ENCODE measurements at regions of chrX and their contacts with region 1.

Region 1: GRCh38 chrX:134484039-134484438 is 24.1 kb downstream of the HPRT1 start:
- DNase-seq: peak in 1 of 35 experiments; percentile 57
- ATAC-seq: no peak
- H3K4me3 ChIP-seq: no peak overlapping the region
- H3K4me3 Mint-ChIP-seq: no peak overlapping the region
- H3K27ac ChIP-seq: no peak overlapping the region
- H3K27ac Mint-ChIP-seq: no peak overlapping the region
- H3K4me1 ChIP-seq: no peaks in the 10 kb centered on the region
- H3K4me1 Mint-ChIP-seq: no peaks in the 10 kb centered on the region
- H3K27me3 ChIP-seq: no peaks in the 10 kb centered on the region
- H3K27me3 Mint-ChIP-seq: peaks cover 0 to 4% of the 10 kb centered on the region in 2 donors

Region 2: GRCh38 chrX:134528960-134529359 is 44.9 kb after region 1 on chrX:
- CTCF ChIA-PET with region 1: no interaction called
- POLR2A ChIA-PET with region 1: no interaction called
- DNase-seq: no peak
- ATAC-seq: no peak
- H3K4me3 ChIP-seq: no peak overlapping the region
- H3K4me3 Mint-ChIP-seq: no peak overlapping the region
- H3K27ac ChIP-seq: no peak overlapping the region
- H3K27ac Mint-ChIP-seq: no peak overlapping the region
- H3K4me1 ChIP-seq: no peaks in the 10 kb centered on the region
- H3K4me1 Mint-ChIP-seq: no peaks in the 10 kb centered on the region
- H3K27me3 ChIP-seq: no peaks in the 10 kb centered on the region
- H3K27me3 Mint-ChIP-seq: peaks cover 0 to 11% of the 10 kb centered on the region in 2 donors

Region 3: GRCh38 chrX:134807039-134807731 is 323.1 kb after region 1 on chrX:
- CTCF ChIA-PET with region 1: no interaction called
- POLR2A ChIA-PET with region 1: interaction called in 1 of 2 experiments, 10 read pairs
- DNase-seq: peak; percentile 55 to 95 (median 86)
- ATAC-seq: peak; percentile 90 to 94 (median 92)
- H3K4me3 ChIP-seq: peak overlapping the region; percentile 79 to 94
- H3K4me3 Mint-ChIP-seq: peak overlapping the region; percentile 82 to 92 (median 86)
- H3K27ac ChIP-seq: peak overlapping the region; percentile 94
- H3K27ac Mint-ChIP-seq: peak overlapping the region; percentile 86 to 97
- H3K4me1 ChIP-seq: peaks cover 15 to 21% of the 10 kb centered on the region in 2 experiments
- H3K4me1 Mint-ChIP-seq: peaks cover 12 to 42% (median 39%) of the 10 kb centered on the region in 3 donors
- H3K27me3 ChIP-seq: no peaks in the 10 kb centered on the region
- H3K27me3 Mint-ChIP-seq: peaks cover 0 to 7% of the 10 kb centered on the region in 2 donors

Measured in T-cell (primary cell).